Activated CD4-positive, alpha-beta T cell treated with anti-CD3 and anti-CD28 coated beads, Interleukin-2, amount 10 ng/mL, durations not matched to agents 7 days and 5 days (primary cell): ENCODE measurements at regions of chr2 and their contacts with region 1.

Region 1: DNA sequence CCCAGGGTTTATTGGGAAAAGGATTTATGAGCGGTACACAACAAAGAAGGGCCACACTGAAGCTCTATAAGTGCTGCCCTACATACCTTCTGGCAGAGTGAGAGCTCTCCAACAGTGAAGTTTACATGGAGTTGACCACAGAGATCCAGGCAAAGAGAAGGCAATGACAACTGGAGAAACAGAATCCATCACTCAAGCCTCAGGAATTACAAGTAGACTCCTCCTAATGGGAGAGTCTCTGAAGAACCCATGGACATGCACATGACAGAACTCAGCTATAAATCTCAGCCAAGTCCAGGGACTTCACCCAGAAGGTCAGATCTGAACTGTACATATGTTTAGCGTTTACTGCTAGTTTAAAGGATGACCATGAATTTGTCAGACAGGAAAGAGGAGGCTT is 164.7 kb downstream of the DNAH7 start:
- DNase-seq: no peak
- H3K4me3 Mint-ChIP-seq: no peak overlapping the region
- H3K27ac Mint-ChIP-seq: no peak overlapping the region
- H3K4me1 Mint-ChIP-seq: no peaks in the 10 kb centered on the region
- H3K27me3 Mint-ChIP-seq: peaks cover 9% of the 10 kb centered on the region

Region 2: DNA sequence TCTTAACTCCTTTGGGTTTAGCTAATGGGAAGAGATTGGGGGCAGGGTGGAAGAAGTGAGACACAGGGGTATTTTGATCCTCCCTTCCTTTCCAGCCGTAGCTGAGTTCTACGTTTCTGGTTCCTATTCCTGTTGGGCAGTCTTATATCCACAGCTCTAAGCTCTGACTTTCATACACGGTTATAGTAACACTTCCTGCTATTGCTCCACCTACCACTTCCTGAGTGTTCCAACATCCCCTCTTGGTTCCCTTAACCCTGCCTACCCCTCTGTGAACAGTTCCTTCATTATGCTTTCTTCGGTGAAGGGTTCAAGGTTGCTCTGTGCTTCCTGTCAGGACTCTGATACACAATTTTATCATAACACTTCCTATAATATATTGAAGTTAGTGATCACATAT is 40.4 kb before region 1 on chr2:
- CTCF ChIA-PET with region 1: no interaction called
- POLR2A ChIA-PET with region 1: no interaction called
- DNase-seq: no peak
- H3K4me3 Mint-ChIP-seq: no peak overlapping the region
- H3K27ac Mint-ChIP-seq: no peak overlapping the region
- H3K4me1 Mint-ChIP-seq: no peaks in the 10 kb centered on the region
- H3K27me3 Mint-ChIP-seq: peaks cover 2% of the 10 kb centered on the region

Region 3: DNA sequence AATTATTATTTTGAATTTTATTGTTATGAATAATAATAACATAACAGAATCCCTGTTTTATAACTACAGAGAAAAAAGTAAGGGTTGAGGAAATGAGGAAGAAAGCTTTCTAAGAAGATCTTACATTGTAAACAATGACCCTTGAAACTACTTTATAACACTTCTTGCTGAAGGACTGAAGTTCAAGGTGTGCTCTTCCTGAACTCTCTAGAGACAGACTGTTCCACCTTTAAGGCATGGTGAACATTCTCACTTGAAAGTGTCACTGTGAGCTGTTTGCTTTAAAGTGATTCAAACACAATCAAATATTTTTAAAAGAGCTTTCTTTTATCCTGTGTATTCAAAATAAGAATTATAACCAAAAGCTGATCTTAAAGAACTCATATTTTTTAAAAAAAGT is 33.2 kb after region 1 on chr2:
- CTCF ChIA-PET with region 1: no interaction called
- POLR2A ChIA-PET with region 1: interaction called, 11 read pairs
- DNase-seq: no peak
- H3K4me3 Mint-ChIP-seq: no peak overlapping the region
- H3K27ac Mint-ChIP-seq: no peak overlapping the region
- H3K4me1 Mint-ChIP-seq: no peaks in the 10 kb centered on the region
- H3K27me3 Mint-ChIP-seq: peaks cover 7% of the 10 kb centered on the region